Panc1 (cell line): ENCODE measurements at regions of chr6 and their contacts with region 1.

Region 1: GRCh38 chr6:110859335-110859792 is 15.2 kb upstream of the AMD1 start:
- DNase-seq: no peak
- ATAC-seq: no peak
- H3K4me3 ChIP-seq: no peak overlapping the region
- H3K27ac ChIP-seq: no peak overlapping the region
- H3K4me1 ChIP-seq: no peaks in the 10 kb centered on the region
- H3K27me3 ChIP-seq: no peaks in the 10 kb centered on the region
- CTCF ChIP-seq: no peak

Region 2: DNA sequence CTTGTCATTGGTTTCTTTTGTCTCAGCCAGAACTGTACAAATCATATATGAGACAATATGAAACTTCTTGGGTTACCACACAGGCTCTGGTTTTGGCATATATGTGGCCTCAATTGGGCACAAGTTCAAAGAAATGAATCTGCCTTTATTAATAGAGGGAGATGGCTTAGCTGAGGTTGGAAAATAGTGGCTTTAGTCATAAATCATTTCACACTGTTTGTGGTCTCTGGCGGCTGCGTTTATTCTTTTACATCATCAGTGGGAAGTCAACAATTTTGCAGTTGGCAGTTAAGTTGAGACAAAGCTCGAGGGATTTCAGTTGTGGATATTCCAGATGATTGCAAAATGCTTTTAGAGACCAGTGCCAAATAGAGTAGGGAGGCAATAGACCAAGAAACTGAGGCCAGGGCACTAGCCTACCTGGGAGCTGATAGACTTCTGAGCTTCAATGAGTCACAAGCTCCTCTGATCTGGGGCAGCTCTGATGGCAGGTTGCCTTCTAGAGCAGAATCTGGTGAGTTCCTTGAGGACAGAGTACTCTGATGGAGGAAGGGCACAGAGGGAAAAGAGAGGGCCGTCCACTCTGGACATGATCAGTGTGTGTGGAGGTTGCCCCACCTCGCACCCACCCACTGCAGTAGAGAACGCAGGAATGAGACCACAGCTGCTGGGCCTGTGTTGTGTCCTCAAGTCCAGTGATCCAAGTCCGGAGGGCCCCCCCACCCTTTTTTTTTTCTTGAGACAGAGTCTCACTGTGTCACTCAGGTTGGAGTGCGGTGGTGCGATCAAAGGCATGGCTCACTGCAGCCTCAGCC is 1937.6 kb before region 1 on chr6:
- CTCF ChIA-PET with region 1: no interaction called
- POLR2A ChIA-PET with region 1: no interaction called
- in situ Hi-C with region 1: no loop called
- intact Hi-C with region 1: no loop called
- DNase-seq: no peak
- ATAC-seq: no peak
- H3K4me3 ChIP-seq: no peak overlapping the region
- H3K27ac ChIP-seq: no peak overlapping the region
- H3K4me1 ChIP-seq: no peaks in the 10 kb centered on the region
- H3K27me3 ChIP-seq: peaks cover 9% of the 10 kb centered on the region; the same call in 1 of the 2 replicates
- CTCF ChIP-seq: no peak

Region 3: DNA sequence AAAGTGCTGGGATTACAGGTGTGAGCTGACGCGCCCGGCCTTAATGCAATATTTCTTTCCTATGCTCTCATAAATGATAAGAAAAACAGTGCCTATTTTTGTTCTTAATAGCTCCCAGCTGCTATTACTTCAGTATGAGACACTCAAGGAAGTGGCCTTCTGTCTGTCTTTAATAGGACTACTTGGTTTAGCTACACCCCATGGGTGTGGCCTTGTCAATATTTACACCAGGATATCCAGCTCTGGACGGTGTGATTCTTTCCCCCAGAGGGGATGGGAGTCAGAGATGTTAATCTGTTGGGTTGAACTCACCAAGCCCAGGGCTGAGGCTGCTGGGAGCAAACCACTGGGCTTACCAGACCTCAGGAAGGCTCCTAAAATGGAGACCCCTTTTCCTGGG is 1629.8 kb before region 1 on chr6:
- CTCF ChIA-PET with region 1: no interaction called
- POLR2A ChIA-PET with region 1: interaction called, 14 read pairs
- in situ Hi-C with region 1: no loop called
- intact Hi-C with region 1: no loop called
- DNase-seq: no peak
- ATAC-seq: no peak
- H3K4me3 ChIP-seq: no peak overlapping the region
- H3K27ac ChIP-seq: no peak overlapping the region
- H3K4me1 ChIP-seq: no peaks in the 10 kb centered on the region
- H3K27me3 ChIP-seq: peaks cover 3% of the 10 kb centered on the region; the same call in 1 of the 2 replicates
- CTCF ChIP-seq: no peak

Region 4: DNA sequence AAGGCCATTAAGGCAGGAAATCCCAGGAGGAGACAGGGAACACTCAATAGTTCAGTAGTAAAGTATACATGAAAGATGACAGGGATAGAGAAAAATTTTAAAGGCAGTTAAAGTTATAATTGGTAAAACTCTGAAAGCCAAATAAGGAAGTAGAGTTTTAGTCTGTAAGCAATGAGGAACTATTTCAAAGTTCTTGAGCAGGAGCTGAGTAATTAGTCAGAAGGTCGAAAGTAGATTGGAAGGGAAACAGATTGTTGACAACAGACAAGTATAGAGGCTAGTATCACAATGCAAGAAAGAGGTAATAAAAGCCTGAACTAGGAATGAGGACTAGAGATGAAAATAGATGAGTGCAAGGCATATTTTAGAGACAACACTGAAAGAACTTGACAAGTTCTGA is 194.4 kb before region 1 on chr6:
- CTCF ChIA-PET with region 1: no interaction called
- POLR2A ChIA-PET with region 1: no interaction called
- in situ Hi-C with region 1: no loop called
- intact Hi-C with region 1: no loop called
- DNase-seq: no peak
- ATAC-seq: no peak
- H3K4me3 ChIP-seq: no peak overlapping the region
- H3K27ac ChIP-seq: peak overlapping the region; percentile 1; the same call in 1 of the 2 replicates
- H3K4me1 ChIP-seq: no peaks in the 10 kb centered on the region
- H3K27me3 ChIP-seq: no peaks in the 10 kb centered on the region
- CTCF ChIP-seq: no peak

Region 5: GRCh38 chr6:110897433-110897832 is 38.1 kb after region 1 on chr6:
- CTCF ChIA-PET with region 1: no interaction called
- POLR2A ChIA-PET with region 1: no interaction called
- in situ Hi-C with region 1: no loop called
- intact Hi-C with region 1: no loop called
- DNase-seq: no peak
- ATAC-seq: no peak
- H3K4me3 ChIP-seq: no peak overlapping the region
- H3K27ac ChIP-seq: no peak overlapping the region
- H3K4me1 ChIP-seq: no peaks in the 10 kb centered on the region
- H3K27me3 ChIP-seq: no peaks in the 10 kb centered on the region
- CTCF ChIP-seq: no peak